ENCODE measurements at regions of chr1 and their contacts with region 1.

Region 1: GRCh38 chr1:3460672-3461131 is 6.2 kb downstream of the ARHGEF16 start:
- DNase-seq: peak in 3 of 5 donors; percentile 33 to 71 (median 62)
- H3K4me3 ChIP-seq: no peak overlapping the region
- H3K27ac ChIP-seq: peak overlapping the region in 1 of 2 donors; percentile 25
- H3K4me1 ChIP-seq: peaks cover 8% of the 10 kb centered on the region
- H3K27me3 ChIP-seq: no peaks in the 10 kb centered on the region
- CTCF ChIP-seq: no peak
- EP300 ChIP-seq: no peak
- POLR2A ChIP-seq: no peak

Region 2: DNA sequence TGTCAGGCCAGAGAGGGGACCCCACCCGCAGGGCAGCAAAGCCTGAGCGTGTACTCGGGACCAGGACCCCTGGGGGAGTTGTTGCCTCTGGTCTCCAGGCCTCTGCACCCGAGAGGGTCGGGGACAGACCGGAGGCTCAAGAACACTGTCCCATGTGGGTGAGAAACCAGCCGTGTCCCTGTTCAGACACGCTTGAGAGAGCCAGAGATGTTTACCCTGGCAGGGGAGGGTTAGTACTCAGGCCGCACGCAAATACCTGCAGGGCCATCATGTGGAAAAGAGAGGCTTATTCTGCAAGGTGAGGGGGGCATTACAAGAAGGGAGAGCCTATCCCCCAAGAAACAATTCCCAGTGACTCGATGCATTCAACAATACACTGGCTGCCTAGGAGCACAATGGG is 80.2 kb before region 1 on chr1:
- intact Hi-C with region 1: no loop called
- DNase-seq: no peak
- H3K4me3 ChIP-seq: no peak overlapping the region
- H3K27ac ChIP-seq: no peak overlapping the region
- H3K4me1 ChIP-seq: no peaks in the 10 kb centered on the region
- H3K27me3 ChIP-seq: no peaks in the 10 kb centered on the region
- CTCF ChIP-seq: no peak
- EP300 ChIP-seq: no peak
- POLR2A ChIP-seq: no peak

Region 3: DNA sequence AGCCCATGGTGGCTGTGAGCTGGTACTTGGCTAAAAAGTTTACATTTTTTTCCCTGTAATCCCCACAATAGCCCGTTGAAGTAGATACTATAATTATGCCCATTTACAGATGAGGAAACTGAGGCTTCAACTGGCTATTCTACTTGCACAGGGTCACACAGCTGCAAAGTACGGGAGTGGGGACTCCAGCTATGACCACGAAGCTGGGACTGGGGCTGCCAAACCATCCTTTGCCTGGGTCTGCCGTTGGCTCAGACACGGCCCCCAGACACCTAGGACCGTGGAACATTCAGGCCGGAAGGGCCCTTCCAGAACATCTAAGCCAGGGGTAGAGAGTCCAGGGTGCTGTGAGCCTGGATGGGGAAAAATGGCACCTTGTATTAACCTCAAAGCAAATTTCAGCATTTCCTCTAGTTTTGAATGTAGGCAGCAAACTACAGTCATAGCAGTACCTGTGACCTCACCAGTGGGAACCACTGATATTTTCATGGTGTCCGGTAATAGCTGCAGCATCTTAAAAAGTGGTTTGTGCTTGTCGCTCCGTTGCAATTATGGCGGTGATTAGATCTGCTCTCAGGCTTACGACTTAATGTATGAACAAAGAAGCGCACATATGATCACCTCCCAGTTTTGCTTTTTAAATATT is 195.9 kb after region 1 on chr1:
- intact Hi-C with region 1: no loop called
- DNase-seq: no peak
- H3K4me3 ChIP-seq: no peak overlapping the region
- H3K27ac ChIP-seq: no peak overlapping the region
- H3K4me1 ChIP-seq: no peaks in the 10 kb centered on the region
- H3K27me3 ChIP-seq: peaks cover 2% of the 10 kb centered on the region
- CTCF ChIP-seq: no peak
- EP300 ChIP-seq: no peak
- POLR2A ChIP-seq: no peak

Region 4: DNA sequence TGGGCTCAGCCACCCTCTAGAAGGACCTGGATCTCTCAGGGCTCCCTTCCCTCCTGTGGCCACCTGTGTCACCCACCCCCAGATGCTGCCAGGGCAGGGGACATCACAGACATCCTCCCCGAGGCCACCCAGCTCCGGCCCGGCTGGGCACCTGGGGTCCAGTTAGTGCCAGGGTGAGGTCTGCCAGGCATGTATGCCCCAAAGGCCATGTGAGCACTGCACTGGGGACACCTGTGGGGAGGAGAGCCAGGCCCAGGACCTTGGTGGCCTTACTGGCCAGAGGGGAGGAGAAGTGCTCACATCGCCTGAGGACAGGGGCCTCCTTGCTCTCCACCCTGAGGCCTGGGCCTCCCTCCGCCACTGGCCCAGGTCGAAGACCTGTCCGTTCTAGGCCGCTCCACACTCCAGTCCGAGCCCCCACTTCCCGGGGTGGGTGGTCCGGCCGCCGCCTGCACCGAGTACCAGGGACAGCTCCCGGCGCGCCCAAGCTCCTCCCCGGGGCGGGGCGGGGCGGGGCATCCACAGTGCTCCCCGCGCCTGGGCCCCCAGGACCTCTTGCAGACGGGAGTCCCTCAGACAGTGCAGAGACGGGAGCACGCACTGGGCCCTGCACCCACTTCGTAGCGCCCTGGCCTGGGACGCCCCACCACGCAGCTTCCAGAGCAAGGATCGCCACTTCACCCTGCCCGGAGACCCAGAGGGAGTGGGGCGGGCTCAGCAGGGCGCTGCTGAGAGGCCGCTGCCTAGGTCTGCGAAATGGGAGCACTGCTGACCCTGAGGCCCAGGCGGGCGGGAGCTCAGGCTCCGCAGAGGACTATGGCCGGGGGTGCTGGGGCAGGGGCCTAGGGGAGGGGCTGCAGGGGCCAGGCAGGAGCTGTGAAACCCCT is 257.3 kb after region 1 on chr1:
- intact Hi-C with region 1: loop called in 2 of 4 experiments (anchors 10 kb)
- DNase-seq: no peak
- H3K4me3 ChIP-seq: no peak overlapping the region
- H3K27ac ChIP-seq: no peak overlapping the region
- H3K4me1 ChIP-seq: peaks cover 2% of the 10 kb centered on the region
- H3K27me3 ChIP-seq: no peaks in the 10 kb centered on the region
- CTCF ChIP-seq: no peak
- EP300 ChIP-seq: no peak
- POLR2A ChIP-seq: no peak

Measured in ovary (tissue), 10 donors.